Ascending aorta (tissue), 2 donors: ENCODE measurements at regions of chr13 and their contacts with region 1.

Region 1: GRCh38 chr13:50529154-50529882 is 314.2 kb downstream of the DLEU7 start:
- DNase-seq: peak in 1 of 2 donors; percentile 78
- H3K4me3 ChIP-seq: peak overlapping the region; percentile 24 to 48
- H3K27ac ChIP-seq: peak overlapping the region; percentile 62 to 63
- H3K4me1 ChIP-seq: peaks cover 18 to 24% of the 10 kb centered on the region in 2 donors
- H3K27me3 ChIP-seq: no peaks in the 10 kb centered on the region
- CTCF ChIP-seq: no peak

Region 2: DNA sequence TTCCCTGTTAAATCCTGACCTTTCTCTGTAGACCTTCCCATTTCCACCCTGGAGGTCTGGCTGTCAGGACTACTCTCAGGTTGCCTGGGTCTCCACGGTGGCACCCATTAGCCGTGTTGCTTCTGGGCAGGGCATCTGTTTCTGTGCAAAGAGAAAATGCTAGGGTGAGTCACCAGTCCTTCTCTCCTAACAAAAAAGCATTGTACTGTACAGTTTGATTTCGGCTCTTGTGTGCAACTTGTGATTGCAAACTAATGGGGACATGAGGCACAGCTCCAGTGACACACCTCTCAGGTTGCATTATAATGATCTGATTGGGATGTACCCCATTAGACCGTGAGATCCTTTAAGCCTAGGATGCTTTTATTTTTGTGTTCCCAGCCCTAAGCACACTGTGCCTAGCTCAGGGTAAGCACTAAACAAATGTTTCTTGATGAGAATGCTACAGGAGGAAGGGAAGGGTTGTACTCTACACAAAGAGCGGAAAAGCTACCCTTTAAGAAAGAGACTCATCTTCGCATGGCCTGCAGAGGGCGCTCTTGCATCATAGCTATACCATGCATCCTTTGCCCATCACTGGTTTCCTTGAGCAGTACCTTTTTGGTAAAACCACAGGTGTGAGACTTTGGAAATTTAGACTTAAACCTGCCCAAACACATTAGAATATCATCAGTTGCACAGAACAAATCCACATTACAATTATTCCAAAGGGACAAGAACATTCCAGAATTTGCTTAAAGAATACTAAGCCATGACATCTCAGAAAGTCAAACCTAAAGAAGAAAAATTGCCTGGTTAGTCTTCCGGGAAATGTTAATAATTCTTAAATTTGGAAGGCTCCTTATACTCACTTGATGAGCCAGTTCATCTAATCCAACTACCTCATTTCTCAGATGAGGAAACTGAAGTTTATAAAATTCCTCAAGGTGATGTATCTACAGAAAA is 552.7 kb before region 1 on chr13:
- intact Hi-C with region 1: loop called (anchors 5 kb)
- DNase-seq: peak in 1 of 2 donors; percentile 80
- H3K4me3 ChIP-seq: no peak overlapping the region
- H3K27ac ChIP-seq: no peak overlapping the region
- H3K4me1 ChIP-seq: no peaks in the 10 kb centered on the region
- H3K27me3 ChIP-seq: no peaks in the 10 kb centered on the region
- CTCF ChIP-seq: peak; percentile 66 to 84 (median 80)

Region 3: GRCh38 chr13:49996951-49997895 is 532.1 kb before region 1 on chr13 and contains the start of gene TRIM13:
- intact Hi-C with region 1: loop called (anchors 5 kb)
- DNase-seq: peak; percentile 74 to 96
- H3K4me3 ChIP-seq: peak within 1 kb of the TSS; percentile 96 to 99
- H3K27ac ChIP-seq: peak within 1 kb of the TSS; percentile 99 to 100
- H3K4me1 ChIP-seq: peaks cover 13 to 40% of the 10 kb centered on the region in 2 donors
- H3K27me3 ChIP-seq: no peaks in the 10 kb centered on the region
- CTCF ChIP-seq: peak; percentile 61 to 84 (median 78)
- total RNA-seq, gene TRIM13: 13.4 TPM

Region 4: DNA sequence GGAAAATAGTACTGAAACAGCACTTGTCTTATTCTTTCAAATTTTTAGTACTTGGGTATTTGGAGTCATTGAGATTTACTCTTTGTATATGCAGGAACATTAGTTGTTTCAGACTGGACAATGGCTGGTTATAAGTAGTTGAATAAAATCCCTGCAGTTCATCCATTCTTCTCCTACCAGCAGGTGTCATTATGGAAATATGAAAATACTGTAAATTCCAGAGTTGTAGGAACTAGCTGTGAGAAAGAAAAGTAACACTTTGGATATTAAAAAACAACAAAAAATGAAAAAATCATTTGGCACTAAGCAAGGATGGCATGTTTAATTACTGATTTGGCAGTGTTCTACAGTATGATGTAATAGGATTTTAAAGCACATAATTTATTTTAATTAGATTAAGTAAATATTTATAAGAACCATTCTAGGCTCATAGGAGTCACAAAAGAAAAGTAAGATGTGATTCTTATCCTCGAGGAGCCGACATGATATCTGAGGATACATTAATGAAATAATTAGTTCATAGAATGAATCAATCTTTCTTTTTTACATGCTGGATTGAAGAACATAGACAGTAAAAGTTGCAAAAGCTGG is 358.8 kb before region 1 on chr13:
- intact Hi-C with region 1: loop called (anchors 5 kb)
- DNase-seq: no peak
- H3K4me3 ChIP-seq: no peak overlapping the region
- H3K27ac ChIP-seq: no peak overlapping the region
- H3K4me1 ChIP-seq: no peaks in the 10 kb centered on the region
- H3K27me3 ChIP-seq: no peaks in the 10 kb centered on the region
- CTCF ChIP-seq: peak; percentile 29 to 50 (median 35)

Region 5: GRCh38 chr13:50421473-50422130 is 107.7 kb before region 1 on chr13:
- intact Hi-C with region 1: loop called (anchors 5 kb)
- DNase-seq: no peak
- H3K4me3 ChIP-seq: no peak overlapping the region
- H3K27ac ChIP-seq: peak overlapping the region; percentile 23 to 30
- H3K4me1 ChIP-seq: peaks cover 4 to 31% of the 10 kb centered on the region in 2 donors
- H3K27me3 ChIP-seq: no peaks in the 10 kb centered on the region
- CTCF ChIP-seq: no peak

Region 6: DNA sequence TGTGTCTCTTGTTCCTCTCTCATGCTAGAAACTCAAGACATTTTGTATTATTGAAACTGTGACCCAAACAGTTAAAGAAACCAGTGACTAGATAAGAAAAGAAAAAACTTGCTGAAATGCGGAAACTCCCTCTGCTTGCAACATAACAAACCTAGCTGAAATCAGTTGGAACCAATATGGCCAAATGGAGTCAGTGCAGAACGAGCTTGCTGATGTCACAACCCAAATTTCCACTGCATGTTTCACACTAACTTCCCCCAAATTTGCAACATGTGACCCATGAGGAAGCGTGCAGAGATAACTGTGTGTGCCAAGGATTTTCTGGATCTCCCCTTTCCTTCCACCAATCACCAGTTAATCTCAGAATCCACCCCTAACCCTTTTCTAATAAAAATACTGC is 106.2 kb after region 1 on chr13:
- intact Hi-C with region 1: no loop called
- DNase-seq: peak; percentile 14 to 73
- H3K4me3 ChIP-seq: no peak overlapping the region
- H3K27ac ChIP-seq: peak overlapping the region in 1 of 2 donors; percentile 27
- H3K4me1 ChIP-seq: no peaks in the 10 kb centered on the region
- H3K27me3 ChIP-seq: no peaks in the 10 kb centered on the region
- CTCF ChIP-seq: no peak

Region 7: GRCh38 chr13:50801087-50801931 is 272.0 kb after region 1 on chr13:
- intact Hi-C with region 1: loop called (anchors 5 kb)
- DNase-seq: peak in 1 of 2 donors; percentile 64
- H3K4me3 ChIP-seq: no peak overlapping the region
- H3K27ac ChIP-seq: no peak overlapping the region
- H3K4me1 ChIP-seq: peaks cover 0 to 5% of the 10 kb centered on the region in 2 donors
- H3K27me3 ChIP-seq: no peaks in the 10 kb centered on the region
- CTCF ChIP-seq: peak; percentile 57 to 70 (median 63)